ENCODE measurements at regions of chr6 and their contacts with region 1.

Region 1: GRCh38 chr6:70221025-70221714 is 81.7 kb downstream of the COL9A1 start:
- DNase-seq: peak in 2 of 9 experiments; percentile 17 to 32
- ATAC-seq: peak; percentile 49
- H3K4me3 ChIP-seq: no peak overlapping the region
- H3K4me3 Mint-ChIP-seq: no peak overlapping the region
- H3K27ac ChIP-seq: no peak overlapping the region
- H3K27ac Mint-ChIP-seq: no peak overlapping the region
- H3K4me1 ChIP-seq: no peaks in the 10 kb centered on the region
- H3K4me1 Mint-ChIP-seq: no peaks in the 10 kb centered on the region
- H3K27me3 ChIP-seq: no peaks in the 10 kb centered on the region
- H3K27me3 Mint-ChIP-seq: peaks cover 18% of the 10 kb centered on the region
- CTCF ChIP-seq: peak; percentile 88

Region 2: DNA sequence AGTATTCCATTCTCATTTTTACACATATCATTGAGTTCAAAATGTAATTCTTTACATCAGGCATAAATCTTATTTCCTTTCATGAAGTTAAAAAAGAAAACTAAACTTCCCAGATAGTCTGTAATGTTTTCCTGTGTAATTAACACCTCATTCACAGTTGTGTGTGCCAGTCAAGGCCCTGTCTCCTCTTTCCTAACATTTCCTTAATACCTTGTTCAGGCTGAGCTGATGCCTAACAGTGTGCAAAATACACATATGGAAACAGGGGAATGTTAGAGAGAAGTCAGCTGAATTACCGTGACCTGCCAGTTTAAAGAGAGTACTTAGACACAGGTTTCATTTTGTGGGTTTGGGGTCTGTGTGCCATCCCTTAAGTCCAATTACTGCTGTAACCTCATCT is 127.0 kb before region 1 on chr6:
- CTCF ChIA-PET with region 1: no interaction called
- POLR2A ChIA-PET with region 1: no interaction called
- intact Hi-C with region 1: no loop called
- DNase-seq: no peak
- ATAC-seq: no peak
- H3K4me3 ChIP-seq: no peak overlapping the region
- H3K4me3 Mint-ChIP-seq: no peak overlapping the region
- H3K27ac ChIP-seq: no peak overlapping the region
- H3K27ac Mint-ChIP-seq: no peak overlapping the region
- H3K4me1 ChIP-seq: no peaks in the 10 kb centered on the region
- H3K4me1 Mint-ChIP-seq: no peaks in the 10 kb centered on the region
- H3K27me3 ChIP-seq: no peaks in the 10 kb centered on the region
- H3K27me3 Mint-ChIP-seq: no peaks in the 10 kb centered on the region
- CTCF ChIP-seq: no peak

Region 3: DNA sequence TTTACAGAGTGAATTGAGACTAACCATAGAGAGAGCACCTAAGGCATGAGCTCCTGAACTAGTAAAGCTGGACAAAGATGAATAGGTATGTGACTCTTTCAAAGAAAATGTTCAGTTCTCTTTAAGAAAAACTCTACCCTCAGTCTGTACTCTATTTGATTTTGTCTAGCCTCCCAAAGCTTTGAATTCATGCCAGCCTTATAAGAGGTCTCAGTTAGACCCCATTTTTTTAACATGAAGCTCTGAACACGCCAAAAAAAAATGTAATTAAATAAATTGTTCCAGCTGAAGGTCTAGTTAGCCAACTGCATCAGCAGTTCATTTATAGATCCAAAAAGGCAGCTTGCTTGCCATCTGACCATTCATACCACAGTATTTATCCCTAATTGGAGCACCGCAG is 10.1 kb after region 1 on chr6:
- CTCF ChIA-PET with region 1: interaction called, 19 read pairs
- POLR2A ChIA-PET with region 1: no interaction called
- intact Hi-C with region 1: no loop called
- DNase-seq: no peak
- ATAC-seq: no peak
- H3K4me3 ChIP-seq: no peak overlapping the region
- H3K4me3 Mint-ChIP-seq: no peak overlapping the region
- H3K27ac ChIP-seq: no peak overlapping the region
- H3K27ac Mint-ChIP-seq: no peak overlapping the region
- H3K4me1 ChIP-seq: no peaks in the 10 kb centered on the region
- H3K4me1 Mint-ChIP-seq: no peaks in the 10 kb centered on the region
- H3K27me3 ChIP-seq: peaks cover 0 to 3% of the 10 kb centered on the region in 2 experiments
- H3K27me3 Mint-ChIP-seq: no peaks in the 10 kb centered on the region
- CTCF ChIP-seq: no peak